GM13977 (cell line): ENCODE measurements at regions of chr1 and their contacts with region 1.

Region 1: DNA sequence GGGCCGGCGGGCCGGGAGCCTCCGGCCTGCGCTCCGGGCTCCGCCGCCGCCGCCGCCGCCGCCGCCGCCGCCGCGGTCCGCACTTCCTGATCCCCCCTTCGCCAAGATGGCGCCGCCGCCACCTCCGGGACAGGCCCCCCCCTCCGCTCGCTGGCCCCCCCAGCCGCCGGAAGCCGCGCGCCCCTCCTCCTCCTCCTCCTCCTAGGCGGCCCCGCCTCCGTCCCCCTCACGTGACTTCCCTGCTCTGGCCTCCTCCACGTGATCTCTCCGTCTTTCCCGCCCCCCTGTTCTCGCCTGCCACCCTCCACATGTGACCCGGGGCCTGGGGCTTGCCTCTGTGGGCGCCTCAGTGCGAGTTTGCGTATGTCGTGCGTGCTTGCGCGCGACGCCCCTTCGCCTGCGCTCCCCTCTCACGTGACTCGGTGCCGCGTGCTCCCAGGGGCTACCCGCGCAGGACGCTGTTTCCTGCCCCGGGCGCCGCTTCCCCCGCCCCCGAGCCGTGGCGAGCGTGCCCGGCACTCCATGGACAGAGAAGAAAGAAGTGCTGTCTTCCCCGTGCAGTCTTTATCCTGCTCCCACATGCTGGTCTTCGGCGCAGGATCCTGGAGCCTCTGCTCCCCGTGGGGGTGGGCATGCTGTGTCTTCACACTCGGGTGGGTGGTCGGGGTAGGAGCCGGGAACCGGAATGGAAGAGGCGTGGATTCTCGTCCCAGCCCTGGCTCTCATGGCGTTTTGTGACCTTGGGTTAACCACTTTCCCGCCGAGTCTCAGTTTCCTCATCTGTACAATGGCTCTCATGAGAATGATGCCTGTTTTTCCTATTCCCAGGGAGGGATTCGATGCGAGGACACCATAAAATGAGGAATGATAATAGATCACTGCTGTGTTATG is at the start of gene UBE2Q1:
- DNase-seq: peak; percentile 98
- CTCF ChIP-seq: no peak

Region 2: GRCh38 chr1:154878371-154879022 is 319.7 kb after region 1 on chr1:
- in situ Hi-C with region 1: loop called (anchors 25 kb)
- DNase-seq: peak; percentile 79
- CTCF ChIP-seq: peak; percentile 92